ENCODE measurements at regions of chr6 and their contacts with region 1.

Region 1: DNA sequence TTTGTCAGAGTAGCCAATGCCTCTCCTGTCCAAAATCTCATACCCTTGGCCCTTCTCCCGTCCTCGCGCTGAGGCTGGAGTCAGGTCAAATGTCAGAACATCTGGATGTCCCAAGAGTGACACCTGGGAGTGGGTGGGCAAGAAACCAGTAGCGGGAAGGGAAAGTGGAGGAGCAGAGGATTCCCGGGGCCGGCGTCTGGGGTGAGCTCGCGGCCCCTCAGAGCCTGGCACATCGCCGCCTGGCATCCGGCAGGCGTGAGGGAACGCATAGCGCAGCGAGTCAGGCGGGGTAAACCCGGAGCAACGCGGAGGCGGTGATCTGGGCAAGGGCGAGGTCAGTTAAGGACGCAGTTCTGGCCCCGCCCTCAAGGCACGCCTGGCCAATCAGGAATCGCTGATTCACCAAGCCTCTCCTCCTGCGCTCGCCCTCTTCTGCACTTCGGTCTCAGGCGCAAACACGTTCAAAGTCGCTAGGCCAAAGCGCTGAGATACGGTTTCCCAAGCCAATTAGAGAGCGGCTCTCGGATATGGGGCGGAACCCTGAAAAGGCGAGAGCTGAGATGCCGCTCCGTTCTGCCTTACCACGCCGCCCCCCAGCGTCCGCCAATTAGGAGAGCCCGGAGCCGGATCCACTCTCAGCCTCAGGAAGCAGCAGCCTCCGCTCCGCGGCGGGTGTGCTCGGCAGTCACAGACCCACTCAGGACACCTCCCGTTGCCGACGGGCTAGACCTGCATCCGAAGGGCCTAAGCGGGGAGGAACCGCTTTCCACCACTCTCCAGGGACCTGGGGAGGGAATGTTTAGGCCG is 22.5 kb downstream of the VPS52 start:
- DNase-seq: peak; percentile 96 to 98
- ATAC-seq: peak; percentile 95 to 97 (median 96)
- H3K4me3 ChIP-seq: peak overlapping the region; percentile 74
- H3K27ac ChIP-seq: peak overlapping the region; percentile 85
- H3K4me1 ChIP-seq: peaks cover 13% of the 10 kb centered on the region
- H3K27me3 ChIP-seq: no peaks in the 10 kb centered on the region
- CTCF ChIP-seq: no peak

Region 2: GRCh38 chr6:32491700-32492099 is 757.4 kb before region 1 on chr6:
- intact Hi-C with region 1: no loop called
- DNase-seq: no peak
- ATAC-seq: no peak
- H3K4me3 ChIP-seq: no peak overlapping the region
- H3K27ac ChIP-seq: no peak overlapping the region
- H3K4me1 ChIP-seq: no peaks in the 10 kb centered on the region
- H3K27me3 ChIP-seq: no peaks in the 10 kb centered on the region
- CTCF ChIP-seq: no peak

Region 3: DNA sequence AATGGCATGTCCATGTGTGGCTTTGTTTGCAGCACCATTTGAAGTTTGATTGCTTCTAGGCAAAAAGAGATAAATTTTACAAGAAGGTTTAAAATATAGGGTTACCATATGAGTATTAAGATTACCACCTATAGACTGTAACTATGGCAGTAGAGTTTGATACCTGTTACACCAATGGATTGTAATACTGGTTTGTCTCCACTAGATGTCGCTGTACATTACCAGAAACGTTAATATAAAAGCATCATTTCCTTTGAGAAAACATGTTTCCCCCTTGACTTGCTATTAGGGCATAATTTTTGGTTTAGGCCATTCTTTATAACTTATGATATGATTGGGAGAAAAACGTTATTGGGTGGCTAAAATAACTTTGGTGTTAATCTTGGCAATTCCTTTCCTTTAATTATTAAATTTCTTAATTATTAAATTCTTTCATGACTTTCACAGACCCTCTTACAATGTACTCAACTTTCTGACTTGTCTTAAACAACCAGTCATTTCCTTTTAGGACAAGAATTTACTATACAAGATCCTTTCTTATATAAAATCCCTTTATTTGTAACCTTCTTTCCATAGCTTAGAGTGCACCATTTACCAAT is 130.5 kb before region 1 on chr6:
- intact Hi-C with region 1: loop called (anchors 1 to 5 kb)
- DNase-seq: no peak
- ATAC-seq: peak in 2 of 4 donors; percentile 46 to 65
- H3K4me3 ChIP-seq: no peak overlapping the region
- H3K27ac ChIP-seq: no peak overlapping the region
- H3K4me1 ChIP-seq: no peaks in the 10 kb centered on the region
- H3K27me3 ChIP-seq: peaks cover 0 to 43% (median 8%) of the 10 kb centered on the region in 3 donors
- CTCF ChIP-seq: peak; percentile 85

Region 4: GRCh38 chr6:33161354-33162331 is 87.5 kb before region 1 on chr6:
- intact Hi-C with region 1: loop called (anchors 1 to 2 kb)
- DNase-seq: peak; percentile 84 to 90
- ATAC-seq: peak; percentile 92 to 100 (median 94)
- H3K4me3 ChIP-seq: peak overlapping the region; percentile 70
- H3K27ac ChIP-seq: no peak overlapping the region
- H3K4me1 ChIP-seq: peaks cover 5% of the 10 kb centered on the region
- H3K27me3 ChIP-seq: no peaks in the 10 kb centered on the region
- CTCF ChIP-seq: peak; percentile 91

Region 5: DNA sequence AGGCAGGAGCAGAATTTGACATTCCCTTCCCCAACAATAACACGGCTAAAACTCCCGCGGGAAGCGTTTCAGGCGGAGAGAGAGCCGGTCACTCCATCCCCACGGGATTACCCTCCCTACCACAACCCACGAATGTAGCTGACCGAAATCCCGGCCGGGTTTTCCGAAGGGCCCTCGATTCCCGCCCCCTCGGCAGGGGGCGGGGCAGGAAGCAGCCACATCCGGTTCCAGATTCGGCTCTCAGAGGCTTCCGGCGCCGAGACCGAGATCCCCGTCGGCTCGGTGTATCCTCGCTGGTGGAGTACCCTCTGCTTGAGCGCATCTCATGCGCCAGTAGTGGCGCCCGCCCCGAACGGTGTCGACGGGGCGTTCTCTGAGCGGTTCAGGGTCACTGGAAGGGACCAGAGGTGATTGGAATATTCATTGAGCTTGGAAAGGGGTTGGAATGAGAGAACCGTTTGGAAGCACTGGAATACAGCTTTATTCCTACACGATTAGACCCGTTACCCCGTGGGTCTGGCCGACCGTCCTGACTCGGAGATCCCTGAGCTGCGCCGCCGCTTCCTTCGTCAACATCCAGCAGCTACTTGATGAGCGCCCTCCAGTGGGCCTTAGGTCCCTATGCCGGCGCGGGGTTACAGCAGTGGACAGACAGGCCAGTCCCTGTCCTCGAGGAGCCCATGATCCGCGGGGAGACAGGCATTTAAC is 50.3 kb after region 1 on chr6:
- intact Hi-C with region 1: no loop called
- DNase-seq: peak; percentile 93 to 96
- ATAC-seq: peak; percentile 80 to 89 (median 86)
- H3K4me3 ChIP-seq: peak overlapping the region; percentile 82
- H3K27ac ChIP-seq: peak overlapping the region; percentile 97
- H3K4me1 ChIP-seq: peaks cover 26% of the 10 kb centered on the region
- H3K27me3 ChIP-seq: no peaks in the 10 kb centered on the region
- CTCF ChIP-seq: peak; percentile 69

Measured in psoas muscle (tissue), 8 donors.